MCF 10A (cell line): ENCODE measurements at regions of chr1 and their contacts with region 1.

Region 1: GRCh38 chr1:161225534-161226319 is at the start of gene TOMM40L:
- DNase-seq: peak; percentile 100
- H3K4me3 Mint-ChIP-seq: peak within 1 kb of the TSS; percentile 90
- H3K27ac Mint-ChIP-seq: peak within 1 kb of the TSS; percentile 88
- H3K4me1 Mint-ChIP-seq: peaks cover 22% of the 10 kb centered on the region
- H3K27me3 Mint-ChIP-seq: no peaks in the 10 kb centered on the region
- CTCF ChIP-seq: peak; percentile 62
- total RNA-seq, gene TOMM40L: 10.0 and 12.3 TPM in 2 replicates

Region 2: GRCh38 chr1:160567858-160568682 is 657.7 kb before region 1 on chr1:
- CTCF ChIA-PET with region 1: no interaction called
- POLR2A ChIA-PET with region 1: no interaction called
- intact Hi-C with region 1: no loop called
- DNase-seq: no peak
- H3K4me3 Mint-ChIP-seq: no peak overlapping the region
- H3K27ac Mint-ChIP-seq: no peak overlapping the region
- H3K4me1 Mint-ChIP-seq: no peaks in the 10 kb centered on the region
- H3K27me3 Mint-ChIP-seq: peaks cover 34% of the 10 kb centered on the region
- CTCF ChIP-seq: no peak

Region 3: GRCh38 chr1:161117759-161118581 is 107.8 kb before region 1 on chr1 and contains the starts of genes NIT1 and PFDN2:
- CTCF ChIA-PET with region 1: no interaction called
- POLR2A ChIA-PET with region 1: no interaction called
- intact Hi-C with region 1: no loop called
- DNase-seq: peak; percentile 85
- H3K4me3 Mint-ChIP-seq: peak within 1 kb of the TSS; percentile 97
- H3K27ac Mint-ChIP-seq: peak within 1 kb of the TSS; percentile 95
- H3K4me1 Mint-ChIP-seq: peaks cover 50% of the 10 kb centered on the region
- H3K27me3 Mint-ChIP-seq: no peaks in the 10 kb centered on the region
- CTCF ChIP-seq: no peak
- total RNA-seq, gene NIT1: 73.4 and 75.4 TPM in 2 replicates
- total RNA-seq, gene PFDN2: 514 and 683 TPM in 2 replicates

Region 4: DNA sequence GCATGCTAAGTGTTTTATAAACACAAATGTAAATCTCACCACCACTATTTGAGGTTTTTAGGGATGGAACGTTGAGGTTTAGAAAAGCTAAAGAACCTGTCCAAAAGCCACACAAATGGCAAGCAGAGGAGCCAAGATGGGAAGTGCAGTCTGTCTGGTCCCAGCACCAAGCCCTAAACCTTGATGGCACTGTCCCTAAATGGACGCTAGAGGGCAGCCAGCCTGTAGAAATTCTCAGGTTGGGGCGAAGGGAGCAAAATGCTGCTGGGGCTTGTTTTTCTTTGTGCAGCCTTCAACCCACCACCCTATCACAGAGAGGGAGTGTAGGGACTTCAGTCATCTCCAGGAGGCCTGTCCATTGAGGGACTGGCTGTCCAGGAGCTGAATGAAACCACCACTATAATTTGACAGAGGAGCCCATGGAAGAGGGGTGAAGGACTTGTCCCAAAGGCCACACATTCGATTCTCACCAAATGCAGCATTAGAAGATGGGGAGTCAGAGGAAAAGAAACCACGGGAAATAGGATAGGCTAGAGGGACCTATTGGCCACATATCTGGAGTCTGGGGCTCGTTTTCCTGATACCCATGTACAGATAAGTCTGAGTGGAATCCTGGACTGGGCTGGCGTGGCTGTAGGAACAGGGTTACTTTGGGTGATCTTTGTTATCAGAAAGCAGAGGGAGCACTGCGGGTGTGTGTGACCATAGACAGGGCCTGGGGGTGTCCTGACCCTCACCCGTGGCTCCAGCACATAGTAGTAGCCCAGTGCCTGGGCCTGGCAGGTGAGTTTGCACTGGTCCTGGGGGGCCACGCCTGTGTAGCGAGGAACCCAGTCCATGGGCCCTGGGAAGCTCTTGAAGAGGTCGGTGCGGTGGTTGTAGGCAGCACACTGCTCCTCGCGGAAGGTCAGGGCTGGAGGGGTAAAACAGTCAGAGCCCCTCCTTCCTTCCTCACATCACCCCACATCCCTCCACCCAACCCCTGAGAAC is 33.0 kb before region 1 on chr1:
- CTCF ChIA-PET with region 1: interaction called, 154 read pairs
- POLR2A ChIA-PET with region 1: interaction called, 7 read pairs
- intact Hi-C with region 1: loop called (anchors 1 kb)
- DNase-seq: peak; percentile 88
- H3K4me3 Mint-ChIP-seq: no peak overlapping the region
- H3K27ac Mint-ChIP-seq: peak overlapping the region; percentile 71
- H3K4me1 Mint-ChIP-seq: peaks cover 20% of the 10 kb centered on the region
- H3K27me3 Mint-ChIP-seq: no peaks in the 10 kb centered on the region
- CTCF ChIP-seq: peak; percentile 92

Region 5: DNA sequence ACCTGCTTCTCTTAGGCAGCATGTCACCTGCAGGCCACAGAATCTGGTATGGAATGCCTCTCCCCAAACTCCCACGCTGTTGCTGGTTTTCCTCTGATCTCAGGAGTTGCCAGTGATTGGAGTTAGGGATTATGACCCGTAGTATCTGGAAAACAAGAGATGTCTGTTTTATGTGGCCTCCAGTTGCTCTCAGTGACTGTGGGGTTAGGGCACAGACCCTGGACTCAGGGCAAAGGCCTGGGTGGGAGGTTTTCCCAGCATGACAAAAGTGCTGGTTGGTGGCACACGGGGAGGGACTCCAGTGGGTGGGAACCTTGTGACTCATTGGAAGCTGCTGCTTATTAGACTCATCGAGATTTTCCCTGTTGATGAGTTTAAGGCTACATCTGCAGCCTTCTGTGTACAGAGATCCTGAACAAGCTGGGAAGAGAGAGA is 12.3 kb after region 1 on chr1 and contains the start of gene NR1I3:
- CTCF ChIA-PET with region 1: interaction called, 128 read pairs
- POLR2A ChIA-PET with region 1: interaction called, 4 read pairs
- intact Hi-C with region 1: no loop called
- DNase-seq: no peak
- H3K4me3 Mint-ChIP-seq: no peak within 1 kb of the TSS
- H3K27ac Mint-ChIP-seq: no peak within 1 kb of the TSS
- H3K4me1 Mint-ChIP-seq: peaks cover 11% of the 10 kb centered on the region
- H3K27me3 Mint-ChIP-seq: no peaks in the 10 kb centered on the region
- CTCF ChIP-seq: no peak
- total RNA-seq, gene NR1I3: not detected in 2 replicates

Region 6: GRCh38 chr1:161266202-161266601 is 40.5 kb after region 1 on chr1:
- CTCF ChIA-PET with region 1: interaction called, 46 read pairs
- POLR2A ChIA-PET with region 1: no interaction called
- intact Hi-C with region 1: no loop called
- DNase-seq: no peak
- H3K4me3 Mint-ChIP-seq: no peak overlapping the region
- H3K27ac Mint-ChIP-seq: no peak overlapping the region
- H3K4me1 Mint-ChIP-seq: no peaks in the 10 kb centered on the region
- H3K27me3 Mint-ChIP-seq: peaks cover 14% of the 10 kb centered on the region
- CTCF ChIP-seq: no peak

Region 7: DNA sequence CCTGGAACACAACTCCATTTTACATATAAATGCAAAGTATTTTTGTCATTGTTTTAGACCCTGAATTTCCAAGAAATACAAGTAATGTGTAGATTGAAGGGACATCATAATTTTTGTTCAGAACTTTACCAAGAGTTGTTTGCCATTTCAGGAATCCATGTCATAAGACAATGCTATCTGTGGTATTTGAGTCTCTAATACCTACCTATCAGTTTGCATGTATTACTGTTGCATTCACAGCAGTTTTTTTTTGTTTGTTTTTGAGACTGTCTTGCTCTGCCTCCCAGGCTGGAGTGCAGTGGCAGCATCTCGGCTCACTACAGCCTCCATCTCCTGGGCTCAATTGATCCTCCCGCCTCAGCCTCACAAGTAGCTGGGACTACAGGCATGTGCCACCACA is 66.9 kb after region 1 on chr1:
- CTCF ChIA-PET with region 1: interaction called, 357 read pairs
- POLR2A ChIA-PET with region 1: interaction called, 13 read pairs
- intact Hi-C with region 1: loop called (anchors 1 kb)
- DNase-seq: no peak
- H3K4me3 Mint-ChIP-seq: no peak overlapping the region
- H3K27ac Mint-ChIP-seq: no peak overlapping the region
- H3K4me1 Mint-ChIP-seq: no peaks in the 10 kb centered on the region
- H3K27me3 Mint-ChIP-seq: peaks cover 13% of the 10 kb centered on the region
- CTCF ChIP-seq: no peak

Region 8: GRCh38 chr1:161374373-161374772 is 148.6 kb after region 1 on chr1:
- CTCF ChIA-PET with region 1: interaction called, 339 read pairs
- POLR2A ChIA-PET with region 1: interaction called, 8 read pairs
- intact Hi-C with region 1: loop called (anchors 1 kb)
- DNase-seq: peak; percentile 33
- H3K4me3 Mint-ChIP-seq: no peak overlapping the region
- H3K27ac Mint-ChIP-seq: no peak overlapping the region
- H3K4me1 Mint-ChIP-seq: no peaks in the 10 kb centered on the region
- H3K27me3 Mint-ChIP-seq: no peaks in the 10 kb centered on the region
- CTCF ChIP-seq: peak; percentile 38

Region 9: GRCh38 chr1:161738627-161739287 is 513.0 kb after region 1 on chr1:
- CTCF ChIA-PET with region 1: interaction called, 12 read pairs
- POLR2A ChIA-PET with region 1: interaction called, 4 read pairs
- intact Hi-C with region 1: loop called (anchors 10 kb)
- DNase-seq: peak; percentile 87
- H3K4me3 Mint-ChIP-seq: no peak overlapping the region
- H3K27ac Mint-ChIP-seq: no peak overlapping the region
- H3K4me1 Mint-ChIP-seq: peaks cover 35% of the 10 kb centered on the region
- H3K27me3 Mint-ChIP-seq: no peaks in the 10 kb centered on the region
- CTCF ChIP-seq: peak; percentile 76